ENCODE measurements at regions of chr5 and their contacts with region 1.

Region 1: DNA sequence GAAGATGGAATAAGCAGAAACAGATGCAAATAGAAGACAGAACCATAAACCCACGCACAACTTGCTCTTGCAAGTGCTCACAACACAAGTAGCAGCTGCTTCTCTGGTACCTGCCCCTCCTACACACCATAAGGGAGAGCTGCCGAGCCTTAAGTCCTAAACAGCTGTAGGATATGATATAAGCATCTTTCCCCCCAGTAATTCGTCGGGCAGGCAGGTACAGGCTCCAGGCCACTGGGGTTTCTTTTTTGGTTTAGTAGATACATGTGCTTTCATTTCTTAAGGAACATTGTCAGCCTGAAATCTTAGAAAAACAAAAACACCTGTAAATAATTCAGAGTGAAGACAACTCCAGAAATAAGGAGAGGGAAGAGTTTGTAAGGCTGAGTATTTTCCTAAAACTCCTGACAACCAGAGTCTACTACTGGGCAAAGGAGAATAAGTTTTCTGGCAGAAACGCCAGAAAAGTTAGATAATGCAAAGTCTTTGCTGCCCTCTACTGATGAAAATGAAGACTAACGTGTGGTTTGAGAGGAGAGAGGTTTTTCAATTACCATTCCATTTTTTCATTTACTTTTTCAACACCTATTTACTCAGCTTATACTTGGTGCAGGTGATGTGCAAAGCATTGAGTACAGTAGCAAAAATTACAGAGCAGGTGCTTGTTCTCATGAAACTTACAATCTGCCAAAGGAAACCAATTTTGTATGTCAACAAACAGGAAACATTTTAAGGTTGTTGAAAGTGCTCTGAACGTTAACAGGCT is 20.1 kb upstream of the TCERG1 start:
- DNase-seq: peak; percentile 41
- ATAC-seq: peak; percentile 57
- H3K4me3 ChIP-seq: no peak overlapping the region
- H3K4me3 Mint-ChIP-seq: no peak overlapping the region
- H3K27ac ChIP-seq: no peak overlapping the region
- H3K27ac Mint-ChIP-seq: no peak overlapping the region
- H3K4me1 ChIP-seq: no peaks in the 10 kb centered on the region
- H3K4me1 Mint-ChIP-seq: no peaks in the 10 kb centered on the region
- H3K27me3 ChIP-seq: peaks cover 0 to 9% (median 0%) of the 10 kb centered on the region in 4 experiments
- H3K27me3 Mint-ChIP-seq: peaks cover 25% of the 10 kb centered on the region
- CTCF ChIP-seq: peak; percentile 77

Region 2: GRCh38 chr5:145697251-145697990 is 729.6 kb before region 1 on chr5:
- CTCF ChIA-PET with region 1: interaction called, 3 read pairs
- POLR2A ChIA-PET with region 1: no interaction called
- intact Hi-C with region 1: loop called (anchors 5 kb)
- DNase-seq: peak; percentile 7
- ATAC-seq: no peak
- H3K4me3 ChIP-seq: no peak overlapping the region
- H3K4me3 Mint-ChIP-seq: no peak overlapping the region
- H3K27ac ChIP-seq: no peak overlapping the region
- H3K27ac Mint-ChIP-seq: no peak overlapping the region
- H3K4me1 ChIP-seq: no peaks in the 10 kb centered on the region
- H3K4me1 Mint-ChIP-seq: no peaks in the 10 kb centered on the region
- H3K27me3 ChIP-seq: no peaks in the 10 kb centered on the region
- H3K27me3 Mint-ChIP-seq: no peaks in the 10 kb centered on the region
- CTCF ChIP-seq: no peak

Region 3: DNA sequence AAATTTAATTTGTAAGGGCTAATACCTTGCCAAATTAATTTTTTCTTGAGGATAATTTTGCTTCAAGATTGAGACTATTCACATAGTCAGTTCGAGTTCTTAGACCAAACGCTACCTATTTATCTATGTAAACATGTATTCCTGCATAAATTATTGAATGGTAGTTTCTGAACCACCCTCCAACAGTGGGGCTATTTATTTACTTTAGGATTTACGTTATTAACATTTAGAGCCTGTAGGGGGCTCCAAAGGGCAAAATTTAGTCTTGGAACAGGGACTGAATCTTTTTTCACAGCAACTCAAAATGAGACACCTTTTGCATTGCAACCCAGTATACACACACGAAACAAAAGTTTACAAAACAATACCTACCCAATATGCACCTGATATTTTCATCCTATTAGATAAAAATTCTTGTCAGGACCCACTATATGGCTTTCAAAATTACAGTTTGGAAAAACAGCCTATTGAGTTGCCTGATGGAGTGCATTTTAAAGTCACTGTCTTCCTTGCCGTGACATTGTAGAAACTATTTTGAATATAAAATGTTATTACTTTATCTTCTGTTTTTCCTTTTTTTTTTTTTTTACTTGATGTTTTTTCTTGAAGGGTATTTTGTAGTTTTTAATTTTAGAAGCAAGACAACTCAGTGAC is 135.5 kb before region 1 on chr5:
- CTCF ChIA-PET with region 1: interaction called, 6 read pairs
- POLR2A ChIA-PET with region 1: interaction called, 4 read pairs
- intact Hi-C with region 1: loop called (anchors 1 kb)
- DNase-seq: peak; percentile 50
- ATAC-seq: peak; percentile 39
- H3K4me3 ChIP-seq: no peak overlapping the region
- H3K4me3 Mint-ChIP-seq: no peak overlapping the region
- H3K27ac ChIP-seq: no peak overlapping the region
- H3K27ac Mint-ChIP-seq: no peak overlapping the region
- H3K4me1 ChIP-seq: no peaks in the 10 kb centered on the region
- H3K4me1 Mint-ChIP-seq: no peaks in the 10 kb centered on the region
- H3K27me3 ChIP-seq: no peaks in the 10 kb centered on the region
- H3K27me3 Mint-ChIP-seq: no peaks in the 10 kb centered on the region
- CTCF ChIP-seq: peak; percentile 85